ENCODE measurements at regions of chr19 and their contacts with region 1.

Region 1: GRCh38 chr19:12139885-12140547 is at the start of gene ZNF20:
- DNase-seq: peak; percentile 91
- H3K4me3 ChIP-seq: peak within 1 kb of the TSS; percentile 61 to 99 (median 88)
- H3K27ac ChIP-seq: peak within 1 kb of the TSS; percentile 81
- H3K4me1 ChIP-seq: peaks cover 11% of the 10 kb centered on the region
- H3K27me3 ChIP-seq: no peaks in the 10 kb centered on the region
- CTCF ChIP-seq: no peak
- total RNA-seq, gene ZNF20: 5.2 to 7.3 TPM

Region 2: DNA sequence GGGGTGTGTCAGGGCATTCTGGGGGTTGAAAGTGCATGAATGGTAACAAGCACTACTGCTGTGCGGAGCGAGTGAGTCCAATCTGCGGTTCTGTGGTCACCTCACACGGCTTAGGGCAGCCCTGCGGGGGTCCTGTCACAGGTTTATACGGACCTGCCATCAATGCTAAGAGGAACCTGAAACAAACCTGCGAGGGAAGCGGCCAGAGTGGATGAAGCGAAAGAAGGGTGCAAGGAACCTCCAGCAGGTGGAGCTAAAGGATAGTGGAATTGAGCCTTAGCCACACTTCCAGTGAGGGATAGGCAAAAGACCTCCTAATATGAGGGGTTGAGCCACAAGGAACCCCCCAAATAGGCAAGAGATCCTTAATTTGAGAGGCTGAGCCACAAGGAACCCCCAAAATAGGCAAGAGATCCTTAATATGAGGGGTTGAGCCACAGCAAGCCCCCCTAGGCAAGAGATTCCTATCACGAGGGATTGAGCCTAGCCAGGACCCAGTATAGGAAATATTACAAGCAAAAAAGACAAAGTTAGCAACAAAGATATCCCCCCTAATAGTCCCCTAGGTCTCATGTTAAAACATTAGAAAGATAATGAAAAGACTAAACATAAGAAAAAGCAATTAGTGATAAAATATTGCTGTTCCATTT is 258.7 kb before region 1 on chr19:
- CTCF ChIA-PET with region 1: no interaction called
- dilution Hi-C with region 1: no loop called
- in situ Hi-C with region 1: loop called in 1 of 2 experiments (anchors 25 kb)
- intact Hi-C with region 1: loop called (anchors 1 kb)
- DNase-seq: peak; percentile 48
- H3K4me3 ChIP-seq: no peak overlapping the region
- H3K27ac ChIP-seq: no peak overlapping the region
- H3K4me1 ChIP-seq: no peaks in the 10 kb centered on the region
- H3K27me3 ChIP-seq: no peaks in the 10 kb centered on the region
- CTCF ChIP-seq: peak; percentile 38 to 73

Region 3: DNA sequence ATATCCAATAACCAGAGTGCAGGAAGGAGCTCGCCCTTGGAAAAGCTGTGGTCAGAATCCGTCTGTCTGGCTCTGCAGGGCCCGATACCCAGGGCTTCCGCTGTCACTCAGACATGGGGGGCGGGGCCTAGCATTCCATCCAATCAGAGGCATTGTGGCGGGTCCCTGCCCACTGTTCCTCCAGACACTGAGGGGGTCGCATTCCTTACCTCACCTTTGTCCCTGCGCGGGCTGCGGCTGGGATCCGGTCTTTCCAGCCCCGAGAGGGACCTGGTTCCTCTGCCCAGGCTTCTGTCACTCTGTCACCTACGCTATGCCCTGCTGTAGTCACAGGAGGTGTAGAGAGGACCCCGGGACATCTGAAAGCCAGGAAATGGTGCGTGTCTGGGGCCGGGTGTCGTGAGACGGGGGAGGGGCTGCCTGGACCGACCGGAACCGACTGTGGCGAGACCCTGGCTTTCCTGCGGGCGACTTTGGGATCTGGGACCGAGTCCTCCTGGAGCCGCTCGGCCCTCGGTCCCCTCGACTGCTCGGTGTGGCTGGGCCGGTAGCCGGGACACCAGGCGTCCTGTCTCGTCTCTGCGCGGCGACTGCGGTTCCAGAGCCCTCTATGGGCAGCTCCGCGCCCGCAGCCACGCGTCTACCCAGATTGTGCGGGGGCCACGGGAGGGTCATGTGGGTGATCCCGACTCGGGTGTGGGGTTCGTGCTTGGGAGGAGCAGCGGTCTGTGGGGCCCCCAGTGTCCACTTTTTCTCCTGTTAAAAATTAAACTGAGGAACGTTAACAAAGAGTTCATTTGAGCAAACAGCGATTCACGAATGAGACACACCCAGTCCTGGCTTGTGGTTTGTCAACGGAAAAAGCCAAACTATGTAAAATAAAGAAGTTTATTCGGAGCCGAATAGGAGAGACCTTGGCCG is 252.1 kb before region 1 on chr19 and contains the start of gene ZNF69:
- CTCF ChIA-PET with region 1: no interaction called
- dilution Hi-C with region 1: no loop called
- in situ Hi-C with region 1: loop called in 1 of 2 experiments (anchors 25 kb)
- intact Hi-C with region 1: no loop called
- DNase-seq: peak; percentile 55
- H3K4me3 ChIP-seq: peak within 1 kb of the TSS; percentile 24 to 51 (median 39)
- H3K27ac ChIP-seq: no peak within 1 kb of the TSS
- H3K4me1 ChIP-seq: peaks cover 5% of the 10 kb centered on the region
- H3K27me3 ChIP-seq: no peaks in the 10 kb centered on the region
- CTCF ChIP-seq: peak in 1 of 2 donors; percentile 18
- total RNA-seq, gene ZNF69: 3.4 to 8.5 TPM

Region 4: DNA sequence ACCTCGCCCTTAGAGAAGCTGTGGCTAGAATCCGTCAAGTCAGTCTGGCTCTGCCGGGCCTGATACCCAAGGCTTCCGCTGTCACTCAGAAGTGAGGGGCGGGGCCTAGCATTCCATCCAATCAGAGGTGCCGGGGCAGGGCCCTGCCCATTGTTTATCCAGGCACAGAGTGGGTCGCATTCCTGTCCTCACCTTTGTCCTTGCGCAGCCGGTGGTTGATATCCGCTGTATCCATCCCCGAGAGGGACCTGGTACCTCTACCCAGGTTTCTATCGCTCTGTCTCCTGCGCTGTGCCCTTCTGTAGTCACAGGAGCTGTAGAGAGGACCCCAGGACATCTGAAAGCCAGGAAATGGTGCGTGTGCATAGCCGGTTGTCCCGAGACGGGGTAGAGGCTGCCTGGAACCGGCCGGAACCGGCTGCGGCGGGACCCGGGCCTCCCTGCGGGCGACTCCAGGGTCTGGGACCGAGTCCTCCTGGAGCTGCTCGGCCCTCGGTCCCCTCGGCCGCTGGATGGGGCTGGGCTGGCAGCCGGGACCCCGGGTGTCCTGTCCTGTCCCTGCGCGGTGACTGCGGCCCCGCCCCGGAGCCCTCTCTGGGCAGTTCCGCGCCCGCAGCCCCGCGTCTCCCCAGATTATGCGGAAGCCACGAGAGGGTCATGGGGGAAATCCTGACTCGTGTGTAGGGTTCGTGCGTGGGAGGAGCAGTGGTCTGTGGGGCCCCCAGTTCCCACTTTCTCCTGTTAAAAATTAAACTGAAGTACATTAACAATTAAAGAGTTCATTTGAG is 175.0 kb before region 1 on chr19 and contains the start of gene ZNF763:
- CTCF ChIA-PET with region 1: no interaction called
- dilution Hi-C with region 1: no loop called
- in situ Hi-C with region 1: loop called in 1 of 2 experiments (anchors 25 kb)
- intact Hi-C with region 1: loop called (anchors 1 kb)
- DNase-seq: peak; percentile 70
- H3K4me3 ChIP-seq: peak within 1 kb of the TSS; percentile 39 to 63 (median 46)
- H3K27ac ChIP-seq: no peak within 1 kb of the TSS
- H3K4me1 ChIP-seq: no peaks in the 10 kb centered on the region
- H3K27me3 ChIP-seq: no peaks in the 10 kb centered on the region
- CTCF ChIP-seq: no peak
- total RNA-seq, gene ZNF763: 1.6 to 2.0 TPM

Region 5: DNA sequence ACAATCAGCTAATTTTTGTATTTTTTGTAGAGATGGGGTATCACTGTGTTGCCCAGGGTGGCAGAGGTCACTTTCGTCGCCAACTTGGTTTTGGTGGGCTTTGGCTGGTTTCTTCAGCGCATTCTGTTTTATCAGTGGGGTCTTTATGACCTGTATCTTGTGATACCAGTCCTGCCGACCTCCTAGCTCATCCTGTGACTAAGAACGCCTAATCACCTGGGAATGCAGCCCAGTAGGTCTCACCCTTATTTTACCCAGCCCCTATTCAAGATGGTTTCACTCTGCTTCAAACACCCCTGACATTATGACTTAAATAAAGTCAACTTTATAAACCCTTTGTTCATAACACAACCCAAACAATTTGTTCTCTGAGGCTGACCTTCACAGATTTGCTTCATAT is 84.2 kb before region 1 on chr19:
- CTCF ChIA-PET with region 1: interaction called, 7 read pairs
- dilution Hi-C with region 1: no loop called
- in situ Hi-C with region 1: no loop called
- intact Hi-C with region 1: loop called (anchors 1 kb)
- DNase-seq: no peak
- H3K4me3 ChIP-seq: no peak overlapping the region
- H3K27ac ChIP-seq: no peak overlapping the region
- H3K4me1 ChIP-seq: peaks cover 4% of the 10 kb centered on the region
- H3K27me3 ChIP-seq: peaks cover 2% of the 10 kb centered on the region
- CTCF ChIP-seq: no peak

Region 6: DNA sequence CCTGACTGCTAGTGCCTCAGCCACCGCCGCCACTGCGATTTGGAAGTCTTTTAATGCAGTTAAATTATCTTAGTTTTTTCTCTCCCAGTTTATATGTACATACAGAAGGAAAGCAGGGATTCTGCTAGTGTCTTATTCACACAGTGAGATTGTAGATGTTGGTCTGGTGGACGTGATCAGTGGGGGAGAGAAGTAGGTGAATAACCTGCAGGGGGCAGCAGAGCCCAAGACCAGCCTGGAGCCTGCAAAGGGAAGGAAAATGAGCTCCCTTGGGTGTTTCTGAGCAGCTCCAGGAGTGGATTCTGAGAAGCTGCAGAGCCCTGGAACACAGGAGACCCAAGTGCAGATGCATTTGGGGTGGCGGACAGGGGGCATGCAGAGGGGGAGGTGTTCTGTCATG is 49.2 kb before region 1 on chr19:
- CTCF ChIA-PET with region 1: interaction called, 15 read pairs
- dilution Hi-C with region 1: no loop called
- in situ Hi-C with region 1: no loop called
- intact Hi-C with region 1: loop called (anchors 1 kb)
- DNase-seq: peak; percentile 10
- H3K4me3 ChIP-seq: no peak overlapping the region
- H3K27ac ChIP-seq: no peak overlapping the region
- H3K4me1 ChIP-seq: no peaks in the 10 kb centered on the region
- H3K27me3 ChIP-seq: no peaks in the 10 kb centered on the region
- CTCF ChIP-seq: peak in 1 of 2 donors; percentile 50

Region 7: DNA sequence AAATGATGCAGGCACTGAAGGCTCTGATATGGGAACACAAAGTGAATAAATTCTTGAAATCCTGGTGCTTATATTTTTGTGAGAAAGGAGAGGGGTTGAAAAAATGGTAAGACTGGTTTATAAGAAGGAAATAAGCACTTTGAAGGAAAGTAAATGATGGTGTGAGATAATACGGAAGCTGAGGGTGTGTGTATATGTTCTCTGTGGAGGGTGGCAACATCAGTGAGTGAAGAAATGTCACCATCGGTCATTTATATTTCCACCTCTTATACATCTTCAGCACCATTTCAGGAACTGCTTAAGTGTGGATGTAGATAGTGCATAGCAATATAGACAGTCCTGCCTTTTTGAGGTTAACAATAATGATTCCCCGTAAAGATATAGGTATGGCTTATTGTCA is 40.4 kb after region 1 on chr19:
- CTCF ChIA-PET with region 1: no interaction called
- dilution Hi-C with region 1: no loop called
- in situ Hi-C with region 1: no loop called
- intact Hi-C with region 1: no loop called
- DNase-seq: no peak
- H3K4me3 ChIP-seq: no peak overlapping the region
- H3K27ac ChIP-seq: no peak overlapping the region
- H3K4me1 ChIP-seq: no peaks in the 10 kb centered on the region
- H3K27me3 ChIP-seq: no peaks in the 10 kb centered on the region
- CTCF ChIP-seq: no peak

Measured in mammary epithelial cell (primary cell).